ENCODE measurements at regions of chr3 and their contacts with region 1.

Region 1: DNA sequence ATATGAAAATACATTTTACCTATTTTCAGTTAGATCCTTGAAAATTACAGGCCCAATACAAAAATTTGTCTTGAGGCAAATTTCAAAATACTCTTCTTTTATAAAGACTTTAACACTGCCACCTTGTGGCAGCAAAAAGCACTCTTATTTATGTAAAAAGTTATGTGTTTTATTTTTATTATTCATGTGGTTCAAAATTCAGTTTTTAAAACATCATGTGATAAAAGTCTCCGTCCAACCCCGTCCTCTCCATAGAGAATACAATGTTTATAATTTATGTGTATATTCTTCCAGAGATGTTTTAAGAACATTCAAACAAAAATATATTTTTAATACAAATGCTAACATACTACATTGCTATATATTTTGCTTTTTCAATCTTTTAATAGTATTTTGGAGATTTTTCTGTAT is 36.9 kb upstream of the TRIM59 start:
- DNase-seq: no peak

Region 2: DNA sequence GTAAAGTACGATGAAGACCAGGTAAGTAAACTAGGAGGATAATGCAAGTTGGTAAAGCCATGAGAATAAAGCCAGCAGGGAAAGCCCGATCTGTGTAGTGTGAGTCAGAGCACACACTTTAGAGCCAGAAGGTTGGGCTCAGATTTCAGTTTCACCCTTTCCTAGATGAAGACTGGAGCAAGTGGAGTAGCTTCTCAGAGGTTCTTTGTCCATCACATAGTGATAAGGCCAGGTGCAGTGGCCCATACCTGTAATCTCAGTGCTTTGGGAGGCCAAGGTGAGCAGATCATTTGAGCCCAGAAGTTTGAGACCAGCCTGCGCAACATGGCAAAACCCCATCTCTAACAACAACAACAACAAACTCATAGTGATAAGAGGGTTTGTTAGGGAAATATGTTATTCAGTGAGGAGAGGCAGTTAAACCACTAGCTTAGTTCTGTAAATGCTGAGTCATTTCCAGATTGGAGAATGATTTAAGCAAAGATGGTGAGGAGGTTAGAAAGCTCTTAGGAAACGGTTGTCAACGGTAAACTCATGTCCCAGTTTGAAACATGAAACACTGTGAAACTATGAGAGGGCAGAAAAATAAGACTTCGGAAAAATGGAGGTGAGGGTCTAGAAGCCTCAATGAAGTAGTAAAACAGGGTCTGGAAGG is 458.8 kb before region 1 on chr3:
- intact Hi-C with region 1: loop called (anchors 5 kb)
- DNase-seq: no peak

Region 3: GRCh38 chr3:160163229-160163878 is 323.1 kb before region 1 on chr3:
- intact Hi-C with region 1: loop called (anchors 5 kb)
- DNase-seq: no peak

Region 4: DNA sequence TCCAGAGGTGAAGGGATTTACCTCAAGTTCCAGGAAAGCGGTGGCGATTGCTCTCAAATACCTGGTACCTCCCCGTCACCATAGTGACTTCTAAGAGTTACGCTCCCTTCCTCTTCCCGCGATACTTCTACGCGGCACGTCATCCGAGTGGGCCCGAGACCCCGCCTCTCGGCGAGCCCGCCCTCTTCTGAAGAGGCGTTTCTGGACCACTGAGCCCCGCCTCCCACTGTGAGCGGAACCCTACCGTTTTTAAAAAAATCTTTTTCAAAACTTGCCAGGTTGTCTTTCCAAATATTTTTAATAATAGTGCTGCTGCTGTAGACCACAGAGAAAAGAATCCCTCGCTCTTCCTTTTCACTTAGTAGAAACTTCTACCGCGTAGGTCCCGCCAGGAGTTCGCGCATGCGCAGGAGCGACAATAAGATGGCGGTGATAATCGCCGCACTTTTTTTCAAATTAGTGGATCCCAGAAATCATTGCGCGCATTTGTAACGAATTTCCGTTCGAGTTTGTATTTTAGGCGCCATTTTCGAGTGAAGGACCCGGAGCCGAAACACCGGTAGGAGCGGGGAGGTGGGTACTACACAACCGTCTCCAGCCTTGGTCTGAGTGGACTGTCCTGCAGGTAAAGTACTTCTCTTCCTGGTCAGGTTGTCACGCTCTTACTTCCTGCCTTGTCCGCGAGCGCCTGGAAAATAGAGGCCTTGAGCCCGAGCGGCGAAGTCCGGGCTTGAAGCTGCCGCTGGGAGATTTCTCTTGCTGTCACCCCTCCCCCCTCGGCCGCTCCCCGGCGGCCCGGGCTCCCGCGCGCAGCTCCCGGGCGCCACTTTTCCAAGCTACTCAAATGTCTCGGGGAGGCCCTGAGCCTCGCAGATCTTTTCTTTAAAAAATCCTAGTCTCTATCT is 87.1 kb before region 1 on chr3 and contains the starts of genes IFT80 and SMC4:
- intact Hi-C with region 1: loop called (anchors 5 kb)
- DNase-seq: peak; percentile 91 to 99 (median 95)

Region 5: DNA sequence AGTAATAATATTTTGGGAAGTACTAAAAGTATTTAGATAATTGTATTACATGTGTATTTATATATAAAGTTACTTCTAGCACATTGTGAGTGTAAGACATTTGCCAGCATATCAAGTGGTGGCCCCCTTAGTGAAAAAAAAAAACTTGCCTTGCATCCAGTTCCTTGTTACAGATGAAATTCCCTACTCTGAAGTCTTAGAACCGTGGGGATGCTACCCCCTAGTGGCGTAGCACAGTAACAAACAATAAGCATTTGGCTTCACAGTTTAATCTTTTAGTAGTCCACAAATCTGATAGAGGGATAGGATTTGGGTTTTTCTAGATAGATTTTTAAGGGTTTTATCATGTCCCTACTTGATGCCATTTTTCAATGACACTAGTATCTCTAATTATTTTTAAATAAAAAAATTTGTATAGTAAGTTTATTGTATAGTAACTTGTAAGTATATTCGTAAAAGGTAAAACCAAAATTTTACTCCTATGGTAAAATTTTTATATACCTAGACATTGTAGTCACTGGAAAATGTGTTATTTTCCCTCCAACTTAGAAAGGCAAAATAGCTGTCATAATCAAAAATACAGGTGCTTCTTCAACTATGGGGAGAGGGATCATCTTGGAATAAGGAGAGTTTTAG is 72.7 kb before region 1 on chr3:
- intact Hi-C with region 1: loop called (anchors 5 kb)
- DNase-seq: peak in 7 of 10 donors; percentile 35 to 89 (median 67)

Measured in posterior cingulate gyrus (tissue), 11 donors.